ENCODE measurements at regions of chr20 and their contacts with region 1.

Region 1: DNA sequence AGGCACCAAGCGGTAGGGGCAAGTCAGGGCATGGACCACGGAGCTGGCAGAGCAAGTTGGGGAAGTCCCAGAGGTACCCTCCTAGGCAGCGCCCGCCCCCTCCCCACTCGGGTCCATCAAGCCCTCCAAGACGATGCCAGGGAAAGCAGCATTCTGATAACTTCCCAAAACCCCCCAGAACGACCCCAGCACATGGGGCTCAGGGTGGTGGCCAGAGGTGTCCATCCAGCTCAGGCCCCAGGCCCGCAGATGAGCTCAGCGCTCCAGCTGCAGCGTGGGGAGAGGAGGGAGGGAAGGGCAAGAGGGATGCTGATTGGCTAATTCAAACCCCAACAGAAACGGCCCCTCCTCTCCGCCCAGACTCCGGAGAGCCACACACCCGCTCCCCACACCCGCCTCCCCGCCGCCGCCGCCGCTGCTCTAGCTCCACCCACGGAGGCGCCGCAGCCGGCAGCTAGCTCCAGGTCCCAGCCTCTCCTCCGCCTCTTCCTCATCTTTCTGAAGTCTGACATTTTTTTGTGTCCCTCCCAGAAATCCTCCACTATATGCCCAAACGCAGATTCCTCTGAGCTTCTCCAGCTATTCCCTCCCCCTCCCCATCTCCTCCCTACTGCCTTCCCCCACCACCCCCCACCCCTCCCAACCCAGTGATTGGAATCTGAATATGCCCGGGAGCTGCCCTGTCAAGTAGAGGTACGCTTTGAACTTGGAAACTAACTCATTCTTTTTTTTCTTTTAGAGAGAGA is 40.3 kb upstream of the TLDC2 start:
- DNase-seq: peak; percentile 94
- ATAC-seq: peak; percentile 97
- H3K4me3 Mint-ChIP-seq: peak overlapping the region; percentile 79
- H3K27ac Mint-ChIP-seq: peak overlapping the region; percentile 93
- H3K4me1 Mint-ChIP-seq: peaks cover 22% of the 10 kb centered on the region
- H3K27me3 Mint-ChIP-seq: no peaks in the 10 kb centered on the region

Region 2: GRCh38 chr20:36773597-36774390 is 61.8 kb before region 1 on chr20 and contains the start of gene DSN1:
- CTCF ChIA-PET with region 1: interaction called, 12 read pairs
- DNase-seq: peak; percentile 99
- ATAC-seq: peak; percentile 94
- H3K4me3 Mint-ChIP-seq: peak within 1 kb of the TSS; percentile 86
- H3K27ac Mint-ChIP-seq: peak within 1 kb of the TSS; percentile 95
- H3K4me1 Mint-ChIP-seq: peaks cover 37% of the 10 kb centered on the region
- H3K27me3 Mint-ChIP-seq: no peaks in the 10 kb centered on the region
- total RNA-seq, gene DSN1: 36.0 to 42.7 TPM

Region 3: GRCh38 chr20:36800410-36800809 is 35.2 kb before region 1 on chr20:
- CTCF ChIA-PET with region 1: no interaction called
- DNase-seq: no peak
- ATAC-seq: no peak
- H3K4me3 Mint-ChIP-seq: no peak overlapping the region
- H3K27ac Mint-ChIP-seq: no peak overlapping the region
- H3K4me1 Mint-ChIP-seq: no peaks in the 10 kb centered on the region
- H3K27me3 Mint-ChIP-seq: no peaks in the 10 kb centered on the region

Region 4: GRCh38 chr20:36847009-36847709 is 11.5 kb after region 1 on chr20:
- CTCF ChIA-PET with region 1: interaction called, 22 read pairs
- DNase-seq: no peak
- ATAC-seq: no peak
- H3K4me3 Mint-ChIP-seq: no peak overlapping the region
- H3K27ac Mint-ChIP-seq: no peak overlapping the region
- H3K4me1 Mint-ChIP-seq: peaks cover 16% of the 10 kb centered on the region
- H3K27me3 Mint-ChIP-seq: no peaks in the 10 kb centered on the region

Measured in activated CD8-positive, alpha-beta memory T cell treated with anti-CD3 and anti-CD28 coated beads, Interleukin-2, amount 10 ng/mL, durations not matched to agents 7 days and 5 days (primary cell).